ENCODE measurements at regions of chr1 and their contacts with region 1.

Region 1: DNA sequence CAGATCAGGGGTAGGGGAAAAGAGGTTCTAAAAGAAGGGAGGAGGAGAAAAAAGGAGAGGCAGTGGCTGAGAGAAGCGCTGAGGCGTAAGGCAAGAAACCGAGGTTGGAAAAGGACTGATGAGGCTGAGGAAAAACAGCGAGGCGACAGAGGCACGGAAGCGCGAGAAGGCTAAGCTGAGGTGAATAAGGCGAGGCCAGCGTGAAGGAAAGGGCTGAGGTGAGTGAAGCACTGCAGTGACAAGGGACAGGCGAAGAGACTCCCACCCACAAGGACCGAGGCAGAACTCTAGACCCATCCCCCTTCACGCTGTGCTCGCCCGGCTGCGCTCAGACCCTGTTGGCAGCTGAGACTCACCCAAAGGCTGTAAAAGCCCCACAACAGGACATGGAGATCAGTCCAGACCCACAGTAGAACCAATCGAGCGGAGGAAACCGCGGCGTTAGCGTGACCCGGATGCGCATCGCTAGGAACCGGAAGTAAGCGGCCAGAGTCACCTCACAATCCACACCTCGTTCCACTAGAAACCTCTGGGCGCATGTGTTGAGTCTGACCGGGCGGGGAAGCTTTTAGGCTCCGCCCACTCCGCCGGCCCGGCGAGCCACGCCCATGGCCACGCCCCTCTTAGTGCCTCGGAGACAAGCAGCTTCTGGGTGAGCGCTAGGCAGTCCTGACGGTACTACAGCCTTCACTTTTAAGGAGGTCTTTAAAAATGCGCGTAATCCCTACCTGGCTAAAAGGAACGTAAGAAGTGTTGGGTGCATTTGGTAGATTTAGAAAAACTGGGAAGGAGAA is at the start of gene EYA3:
- DNase-seq: peak; percentile 99
- H3K4me3 ChIP-seq: peak within 1 kb of the TSS; percentile 75
- H3K27ac ChIP-seq: peak within 1 kb of the TSS; percentile 82
- H3K4me1 ChIP-seq: peaks cover 58% of the 10 kb centered on the region
- CTCF ChIP-seq: no peak
- total RNA-seq, gene EYA3: 24.1 and 29.0 TPM in 2 replicates

Region 2: DNA sequence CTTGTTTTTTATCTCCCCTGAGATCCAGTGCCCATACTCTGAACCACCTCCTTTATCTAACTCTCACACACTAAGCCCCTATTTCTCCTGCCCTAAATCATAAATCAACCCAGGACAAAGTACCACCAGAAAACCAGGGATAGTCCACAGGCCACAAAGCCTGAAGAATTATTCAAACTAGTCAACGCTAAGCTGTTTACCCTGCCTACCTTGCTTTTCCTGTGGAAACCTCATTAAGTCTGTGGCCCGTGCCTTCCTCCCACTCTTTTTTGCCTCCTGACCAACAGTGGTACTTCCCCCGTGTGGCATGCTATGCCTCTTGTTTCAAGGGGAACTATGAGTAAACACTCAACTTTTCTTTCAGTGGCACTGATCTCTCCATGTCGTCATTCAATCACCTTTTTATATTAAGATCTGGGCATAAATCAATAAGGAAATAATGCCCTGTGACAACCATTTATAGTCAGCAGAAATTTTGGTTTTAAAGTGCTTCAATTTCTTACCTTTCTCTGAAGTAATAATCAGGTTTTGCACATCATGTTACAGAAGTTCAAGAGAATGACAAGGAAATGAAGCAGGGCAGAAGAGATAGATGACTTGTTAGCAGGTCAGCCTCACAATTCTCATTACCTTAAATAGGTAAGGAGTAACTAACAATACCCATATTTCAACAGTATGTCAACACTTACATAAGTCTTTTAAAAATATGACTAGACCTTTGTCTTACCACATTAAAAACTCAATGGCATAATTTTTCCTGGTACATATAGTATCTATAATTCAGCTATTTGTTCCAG is 32.0 kb before region 1 on chr1:
- CTCF ChIA-PET with region 1: interaction called, 5 read pairs
- POLR2A ChIA-PET with region 1: interaction called, 37 read pairs
- intact Hi-C with region 1: no loop called
- DNase-seq: no peak
- H3K4me3 ChIP-seq: peak overlapping the region; percentile 4
- H3K27ac ChIP-seq: peak overlapping the region; percentile 34
- H3K4me1 ChIP-seq: peaks cover 45% of the 10 kb centered on the region
- CTCF ChIP-seq: no peak

Region 3: DNA sequence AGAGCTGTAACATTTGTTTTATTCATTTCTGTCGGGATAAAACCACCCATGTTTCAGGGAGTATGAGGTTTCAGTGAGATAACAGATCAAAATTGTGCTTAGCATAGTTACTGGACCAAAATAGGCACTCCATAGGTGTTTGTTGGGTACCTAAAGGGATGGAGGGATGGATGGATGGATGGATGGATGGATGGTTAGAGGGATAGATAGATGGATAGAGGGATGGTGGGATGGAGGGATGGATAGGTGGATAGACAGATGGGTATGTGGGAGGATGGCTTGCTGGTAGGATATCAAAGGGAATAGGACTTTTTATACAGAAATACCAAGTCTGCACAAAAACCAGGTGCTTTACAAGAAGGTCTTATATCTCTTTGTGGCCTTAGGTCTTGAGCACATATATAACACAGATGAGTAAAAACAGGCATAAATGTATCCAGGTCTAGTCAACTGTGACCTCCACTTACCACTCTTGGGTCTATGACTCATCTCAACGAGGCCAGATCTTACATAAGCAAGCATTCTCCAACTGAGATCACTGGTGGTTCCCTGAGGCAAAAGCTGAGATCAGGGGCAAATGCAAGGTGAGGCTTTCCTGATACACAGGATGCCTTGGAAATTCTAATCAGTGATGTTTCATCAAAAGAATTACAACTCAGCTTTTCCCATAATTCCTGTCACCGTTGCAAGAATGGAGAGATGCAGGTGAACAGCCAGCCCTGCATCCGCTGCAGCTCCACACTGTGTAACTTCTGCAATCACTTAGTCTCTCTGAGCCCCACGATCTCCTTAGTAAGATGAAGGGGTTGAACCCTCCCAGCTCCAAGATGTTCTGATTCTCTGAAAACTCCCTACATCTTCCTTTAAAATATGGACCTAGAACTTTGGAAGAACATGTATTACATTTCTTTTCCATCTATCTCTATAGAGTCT is 56.1 kb after region 1 on chr1:
- CTCF ChIA-PET with region 1: interaction called, 9 read pairs
- POLR2A ChIA-PET with region 1: interaction called, 10 read pairs
- intact Hi-C with region 1: loop called (anchors 1 kb)
- DNase-seq: peak; percentile 48
- H3K4me3 ChIP-seq: peak overlapping the region; percentile 2
- H3K27ac ChIP-seq: peak overlapping the region; percentile 53
- H3K4me1 ChIP-seq: peaks cover 66% of the 10 kb centered on the region
- CTCF ChIP-seq: no peak

Region 4: GRCh38 chr1:28208818-28209441 is 120.6 kb after region 1 on chr1:
- CTCF ChIA-PET with region 1: interaction called, 5 read pairs
- POLR2A ChIA-PET with region 1: interaction called, 9 read pairs
- intact Hi-C with region 1: loop called (anchors 1 kb)
- DNase-seq: peak; percentile 82
- H3K4me3 ChIP-seq: no peak overlapping the region
- H3K27ac ChIP-seq: peak overlapping the region; percentile 17
- H3K4me1 ChIP-seq: peaks cover 9% of the 10 kb centered on the region
- CTCF ChIP-seq: peak; percentile 96